SK-N-SH (cell line): ENCODE measurements at regions of chr11 and their contacts with region 1.

Region 1: DNA sequence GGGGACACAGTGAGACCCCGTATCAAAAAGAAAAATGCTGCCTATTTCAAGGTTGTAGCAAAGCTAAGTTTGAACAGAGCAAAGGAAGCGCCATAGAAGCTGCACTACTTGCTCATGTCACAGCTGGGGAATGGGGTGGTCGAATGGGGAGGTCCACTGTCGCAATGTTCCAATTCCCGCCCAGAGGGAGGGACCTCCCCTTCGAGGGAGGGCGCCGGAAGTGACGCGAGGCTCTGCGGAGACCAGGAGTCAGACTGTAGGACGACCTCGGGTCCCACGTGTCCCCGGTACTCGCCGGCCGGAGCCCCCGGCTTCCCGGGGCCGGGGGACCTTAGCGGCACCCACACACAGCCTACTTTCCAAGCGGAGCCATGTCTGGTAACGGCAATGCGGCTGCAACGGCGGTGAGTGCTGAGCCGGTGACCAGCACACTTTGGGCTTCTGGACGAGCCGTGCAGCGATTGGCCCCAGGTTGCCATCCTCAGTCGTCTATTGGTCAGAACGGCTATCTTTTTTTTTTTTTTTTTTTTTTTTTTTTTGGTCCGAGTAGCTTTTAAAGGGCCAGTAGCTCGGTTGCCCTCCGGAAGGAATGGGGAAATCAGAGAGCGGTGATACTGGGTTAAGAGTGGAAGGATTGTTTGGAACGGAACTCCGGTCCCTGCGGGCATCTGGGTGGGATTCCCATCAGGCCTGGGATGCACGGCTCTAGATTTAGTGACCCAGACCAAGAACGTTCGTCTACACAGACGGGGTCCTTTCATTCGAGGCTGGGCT is at the start of gene HMBS:
- DNase-seq: peak; percentile 93
- H3K4me3 ChIP-seq: peak within 1 kb of the TSS; percentile 78 to 82
- H3K27ac ChIP-seq: peak within 1 kb of the TSS; percentile 80 to 90; a peak in 3 of 4 replicates
- H3K4me1 ChIP-seq: peaks cover 7 to 13% of the 10 kb centered on the region in 2 experiments; a peak in 2 of 4 replicates
- H3K27me3 ChIP-seq: no peaks in the 10 kb centered on the region
- CTCF ChIP-seq: no peak
- EP300 ChIP-seq: no peak
- RAD21 ChIP-seq: no peak
- polyA plus RNA-seq, gene HMBS: 69.4 and 77.4 TPM in 2 replicates

Region 2: DNA sequence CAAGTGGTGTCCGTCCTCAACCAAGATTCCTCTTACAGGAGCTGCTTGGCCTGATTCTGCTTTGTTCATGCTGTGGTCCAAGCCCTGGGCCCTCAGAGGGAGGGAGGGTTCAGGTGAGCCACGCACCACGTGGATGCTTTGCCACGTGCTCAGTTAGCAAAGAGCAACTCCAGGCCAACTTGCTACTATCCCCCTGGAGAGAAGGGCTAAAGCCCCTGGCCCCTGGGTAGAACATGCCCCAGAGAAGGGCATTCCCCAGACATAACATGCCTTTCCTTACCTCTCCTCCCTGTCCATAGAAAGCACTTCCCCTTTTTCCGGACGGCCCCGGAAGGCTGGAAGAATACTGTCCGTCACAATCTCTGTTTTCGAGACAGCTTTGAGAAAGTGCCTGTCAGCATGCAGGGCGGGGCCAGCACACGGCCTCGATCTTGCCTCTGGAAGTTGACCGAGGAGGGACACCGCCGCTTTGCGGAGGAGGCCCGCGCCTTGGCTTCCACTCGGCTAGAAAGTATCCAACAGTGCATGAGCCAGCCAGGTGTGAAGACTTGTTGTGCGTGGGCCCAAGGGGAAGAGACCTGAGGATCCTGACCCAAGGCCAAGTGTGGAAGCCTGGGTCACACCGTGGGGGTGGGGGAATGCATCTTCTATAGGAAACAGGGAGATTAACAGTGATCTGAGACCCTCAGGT is 104.5 kb before region 1 on chr11:
- CTCF ChIA-PET with region 1: no interaction called
- POLR2A ChIA-PET with region 1: no interaction called
- DNase-seq: no peak
- H3K4me3 ChIP-seq: no peak overlapping the region
- H3K27ac ChIP-seq: no peak overlapping the region
- H3K4me1 ChIP-seq: no peaks in the 10 kb centered on the region
- H3K27me3 ChIP-seq: no peaks in the 10 kb centered on the region; the same call in 1 of the 2 replicates
- CTCF ChIP-seq: no peak
- EP300 ChIP-seq: no peak
- RAD21 ChIP-seq: no peak

Region 3: DNA sequence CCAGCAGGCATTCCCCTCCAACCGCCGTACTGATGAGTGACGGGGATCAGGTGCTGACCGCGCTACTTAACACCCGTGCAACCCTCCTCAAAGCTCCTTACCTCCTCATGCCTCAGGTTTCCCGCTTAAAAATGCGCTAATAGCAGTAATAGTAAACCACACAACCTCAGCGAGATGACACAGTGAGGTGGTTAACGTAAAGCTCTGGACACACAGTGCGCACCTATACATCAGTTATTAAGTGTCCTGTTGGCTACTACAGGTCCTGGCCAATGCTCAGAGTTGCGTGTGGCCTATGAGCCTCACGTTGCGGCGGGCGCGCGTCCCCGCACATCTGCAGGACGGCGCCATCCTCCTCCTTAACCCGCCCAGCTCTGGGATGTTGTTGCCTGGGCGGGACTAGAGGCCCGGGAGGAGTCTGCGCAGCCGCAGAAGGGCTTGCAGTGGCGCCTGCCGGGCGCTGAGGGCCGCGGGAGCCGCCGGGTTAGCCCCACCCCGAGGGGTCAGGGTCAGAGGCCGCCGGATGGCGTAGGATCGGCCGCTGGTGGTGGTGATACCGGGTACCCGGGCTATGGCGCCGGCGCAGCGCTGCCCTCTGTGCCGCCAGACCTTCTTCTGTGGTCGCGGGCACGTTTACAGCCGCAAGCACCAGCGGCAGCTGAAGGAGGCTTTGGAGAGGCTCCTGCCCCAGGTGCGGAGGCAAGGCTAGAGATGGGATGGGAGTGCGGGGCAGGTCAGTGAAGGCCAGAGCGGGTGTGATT is 87.0 kb before region 1 on chr11 and contains the start of gene CENATAC:
- CTCF ChIA-PET with region 1: no interaction called
- POLR2A ChIA-PET with region 1: no interaction called
- DNase-seq: peak; percentile 99
- H3K4me3 ChIP-seq: peak within 1 kb of the TSS; percentile 77 to 97
- H3K27ac ChIP-seq: peak within 1 kb of the TSS; percentile 67 to 69
- H3K4me1 ChIP-seq: peaks cover 5 to 16% of the 10 kb centered on the region in 2 experiments; a peak in 3 of 4 replicates
- H3K27me3 ChIP-seq: no peaks in the 10 kb centered on the region
- CTCF ChIP-seq: no peak
- EP300 ChIP-seq: no peak
- RAD21 ChIP-seq: no peak
- polyA plus RNA-seq, gene CENATAC: 16.0 and 19.8 TPM in 2 replicates

Region 4: GRCh38 chr11:119067371-119068222 is 17.3 kb before region 1 on chr11 and contains the start of gene VPS11:
- CTCF ChIA-PET with region 1: interaction called, 4 read pairs
- POLR2A ChIA-PET with region 1: interaction called, 13 read pairs
- DNase-seq: peak; percentile 97
- H3K4me3 ChIP-seq: peak within 1 kb of the TSS; percentile 83 to 95
- H3K27ac ChIP-seq: peak within 1 kb of the TSS; percentile 76 to 77
- H3K4me1 ChIP-seq: peaks cover 5 to 6% of the 10 kb centered on the region in 2 experiments; a peak in 2 of 4 replicates
- H3K27me3 ChIP-seq: no peaks in the 10 kb centered on the region
- CTCF ChIP-seq: no peak
- EP300 ChIP-seq: 0 out of 4 replicates have a peak, but pooled peaks of 1 of the 2 experiments have one; percentile 43
- RAD21 ChIP-seq: no peak
- polyA plus RNA-seq, gene VPS11: 13.8 and 14.8 TPM in 2 replicates

Region 5: GRCh38 chr11:119095066-119095880 is 10.4 kb after region 1 on chr11:
- CTCF ChIA-PET with region 1: interaction called, 8 read pairs
- POLR2A ChIA-PET with region 1: interaction called, 31 read pairs
- DNase-seq: peak; percentile 96
- H3K4me3 ChIP-seq: peak overlapping the region; percentile 84 to 87
- H3K27ac ChIP-seq: peak overlapping the region; percentile 72 to 89
- H3K4me1 ChIP-seq: peaks cover 22 to 24% of the 10 kb centered on the region in 2 experiments; a peak in 3 of 4 replicates
- H3K27me3 ChIP-seq: no peaks in the 10 kb centered on the region
- CTCF ChIP-seq: 0 out of 2 replicates have a peak, but pooled peaks have one; percentile 14
- EP300 ChIP-seq: peak in 1 of 2 experiments; percentile 57; a peak in 1 of 4 replicates
- RAD21 ChIP-seq: peak; percentile 31

Region 6: DNA sequence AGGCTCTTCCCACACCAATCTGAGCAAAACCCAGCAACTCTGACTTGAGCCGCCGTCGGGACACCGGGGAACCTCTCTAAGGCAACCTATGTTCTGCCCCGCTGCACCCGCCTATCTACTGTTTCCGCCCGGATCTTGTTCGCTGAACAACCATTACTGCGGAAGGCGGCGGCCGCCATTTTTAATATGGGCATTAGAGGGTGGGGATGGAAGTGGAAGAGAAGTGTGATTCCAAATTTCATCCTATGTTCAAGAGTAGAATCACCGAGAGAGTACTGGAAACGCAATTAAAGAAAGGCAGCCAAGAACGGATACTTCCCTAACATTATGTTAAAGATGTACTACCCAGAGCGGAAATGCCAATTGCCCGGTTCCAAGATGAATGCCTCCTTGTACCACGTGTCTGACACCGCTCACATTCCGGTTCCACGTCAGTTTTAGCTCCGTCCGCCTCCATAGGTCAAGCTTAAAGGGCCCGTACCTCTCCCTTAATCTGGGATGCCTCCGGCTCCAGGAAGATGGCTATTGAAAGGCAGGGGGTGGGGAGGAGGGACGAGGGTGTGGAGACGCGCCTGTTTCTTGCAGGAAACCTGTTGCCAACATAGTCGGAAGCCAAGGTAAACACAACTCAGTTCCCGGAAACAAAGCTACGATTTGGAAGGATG is 17.0 kb after region 1 on chr11 and contains the start of gene DPAGT1:
- CTCF ChIA-PET with region 1: interaction called, 8 read pairs
- POLR2A ChIA-PET with region 1: interaction called, 10 read pairs
- DNase-seq: peak; percentile 81
- H3K4me3 ChIP-seq: peak within 1 kb of the TSS; percentile 80 to 90
- H3K27ac ChIP-seq: peak within 1 kb of the TSS; percentile 93 to 97
- H3K4me1 ChIP-seq: peaks cover 13 to 29% of the 10 kb centered on the region in 2 experiments; a peak in 3 of 4 replicates
- H3K27me3 ChIP-seq: no peaks in the 10 kb centered on the region
- CTCF ChIP-seq: no peak
- EP300 ChIP-seq: no peak
- RAD21 ChIP-seq: no peak
- polyA plus RNA-seq, gene DPAGT1: 99.5 and 128 TPM in 2 replicates

Region 7: DNA sequence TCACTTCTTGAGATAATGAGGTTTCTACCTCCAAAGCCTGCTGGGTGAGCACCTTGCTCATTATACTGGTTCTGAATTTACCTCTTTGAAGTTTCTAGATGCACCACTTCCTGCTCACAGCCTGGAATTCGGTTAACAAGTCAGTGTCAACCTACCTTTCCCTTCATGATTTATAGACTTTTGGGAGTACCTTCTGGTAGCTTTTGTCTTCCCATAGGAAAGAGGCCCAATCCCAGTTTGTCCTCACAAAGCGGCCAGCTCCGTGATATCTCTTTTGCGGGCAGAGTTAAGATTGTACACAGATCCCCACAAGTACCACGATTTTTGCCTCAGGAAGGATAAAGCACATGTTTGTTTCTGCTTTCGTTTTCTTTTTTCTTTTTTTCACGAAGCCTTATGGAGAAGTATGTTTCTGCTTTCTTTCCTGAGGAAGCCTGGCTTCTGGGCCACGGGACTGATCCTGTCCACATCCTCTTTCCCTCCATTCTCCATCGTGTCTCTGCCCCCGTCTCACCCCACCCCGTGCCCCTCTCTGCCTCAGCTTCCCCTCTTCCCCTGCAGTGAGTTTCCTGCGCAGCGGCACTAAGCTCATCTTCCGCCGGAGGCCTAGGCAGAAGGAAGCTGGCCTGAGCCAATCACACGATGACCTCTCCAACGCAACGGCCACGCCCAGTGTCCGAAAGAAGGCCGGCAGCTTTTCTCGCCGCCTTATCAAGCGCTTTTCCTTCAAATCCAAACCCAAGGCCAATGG is 30.8 kb after region 1 on chr11:
- CTCF ChIA-PET with region 1: no interaction called
- POLR2A ChIA-PET with region 1: no interaction called
- DNase-seq: no peak
- H3K4me3 ChIP-seq: no peak overlapping the region
- H3K27ac ChIP-seq: no peak overlapping the region
- H3K4me1 ChIP-seq: peaks cover 5 to 6% of the 10 kb centered on the region in 2 experiments; a peak in 3 of 4 replicates
- H3K27me3 ChIP-seq: no peaks in the 10 kb centered on the region
- CTCF ChIP-seq: no peak
- EP300 ChIP-seq: no peak
- RAD21 ChIP-seq: no peak